GM23248 (cell line): ENCODE measurements at regions of chr11 and their contacts with region 1.

Region 1: GRCh38 chr11:108340970-108341369 is 118.1 kb downstream of the ATM start:
- DNase-seq: no peak
- H3K4me3 ChIP-seq: no peak overlapping the region
- H3K27ac ChIP-seq: no peak overlapping the region
- H3K4me1 ChIP-seq: no peaks in the 10 kb centered on the region
- H3K27me3 ChIP-seq: no peaks in the 10 kb centered on the region

Region 2: DNA sequence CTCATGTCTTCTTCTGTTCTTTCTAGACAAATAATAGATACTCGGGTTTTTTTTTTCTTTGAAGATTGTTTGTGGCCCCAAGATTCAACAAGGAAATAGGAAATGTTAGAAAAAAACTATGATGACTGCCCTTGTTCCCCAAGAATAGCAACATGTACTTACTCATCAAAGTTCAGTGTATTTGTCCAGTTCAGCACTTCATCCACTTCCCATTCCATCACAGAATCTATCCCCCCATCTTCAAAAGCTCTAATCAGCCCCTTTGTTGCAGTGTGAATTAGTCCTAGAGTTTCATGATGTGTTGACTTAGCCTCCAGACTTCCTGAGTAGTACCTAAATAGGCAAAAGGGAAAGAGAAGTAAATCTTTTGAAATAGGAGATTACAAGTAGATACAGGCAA is 52.1 kb after region 1 on chr11:
- in situ Hi-C with region 1: no loop called
- DNase-seq: no peak
- H3K4me3 ChIP-seq: no peak overlapping the region
- H3K27ac ChIP-seq: no peak overlapping the region
- H3K4me1 ChIP-seq: no peaks in the 10 kb centered on the region
- H3K27me3 ChIP-seq: no peaks in the 10 kb centered on the region

Region 3: DNA sequence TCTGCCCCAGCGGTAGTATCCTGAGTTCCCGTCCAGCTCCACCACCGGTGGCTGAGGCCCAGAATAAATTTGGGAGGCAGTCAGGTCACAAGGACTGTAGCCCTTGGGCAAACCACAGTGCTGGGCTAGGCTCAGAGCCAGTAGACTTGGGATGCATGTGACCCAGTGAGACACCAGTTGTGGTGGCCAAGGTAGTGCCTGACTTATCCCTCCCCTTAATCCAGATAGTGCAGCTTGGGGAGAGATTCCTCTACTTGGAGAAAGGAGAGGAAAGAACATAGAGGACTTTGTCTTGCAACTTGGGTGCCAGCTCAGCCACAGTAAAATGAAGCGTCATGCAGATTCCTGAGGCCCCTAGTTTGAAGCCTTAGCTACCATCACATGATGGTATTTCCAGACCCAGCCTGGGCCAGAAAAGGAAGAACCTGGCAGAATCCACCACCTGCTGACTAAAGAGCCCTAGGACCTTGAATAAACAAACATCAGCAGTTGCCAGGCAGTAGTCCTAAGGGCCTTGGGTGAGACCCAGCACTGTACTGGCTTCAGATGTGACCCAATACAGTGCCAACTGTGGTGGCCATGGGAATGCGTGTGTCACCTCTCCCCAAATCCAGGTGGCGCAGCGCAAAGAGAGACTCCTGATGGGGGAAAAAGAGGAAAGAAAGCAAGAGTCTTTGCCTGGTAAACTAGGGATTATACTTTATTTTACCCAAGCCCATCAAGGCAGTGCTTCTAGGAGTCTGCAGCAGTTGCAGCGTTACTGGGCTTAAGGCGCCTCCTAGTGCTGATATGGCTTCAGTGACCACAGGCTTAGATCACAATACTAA is 306.9 kb after region 1 on chr11:
- in situ Hi-C with region 1: loop called (anchors 25 kb)
- DNase-seq: peak; percentile 86
- H3K4me3 ChIP-seq: no peak overlapping the region
- H3K27ac ChIP-seq: peak overlapping the region; percentile 6; the same call in 1 of the 2 replicates
- H3K4me1 ChIP-seq: peaks cover 9% of the 10 kb centered on the region; the same call in 1 of the 2 replicates
- H3K27me3 ChIP-seq: no peaks in the 10 kb centered on the region